Caco-2 (cell line): ENCODE measurements at regions of chr17 and their contacts with region 1.

Region 1: GRCh38 chr17:16438557-16439302 is 23.4 kb downstream of the TRPV2 start:
- DNase-seq: peak; percentile 99
- H3K4me3 ChIP-seq: peak overlapping the region; percentile 91
- H3K4me3 Mint-ChIP-seq: peak overlapping the region; percentile 86
- H3K27ac Mint-ChIP-seq: peak overlapping the region; percentile 93
- H3K4me1 ChIP-seq: peaks cover 38% of the 10 kb centered on the region
- H3K4me1 Mint-ChIP-seq: peaks cover 34% of the 10 kb centered on the region
- H3K27me3 ChIP-seq: no peaks in the 10 kb centered on the region
- H3K27me3 Mint-ChIP-seq: no peaks in the 10 kb centered on the region
- CTCF ChIP-seq: no peak

Region 2: DNA sequence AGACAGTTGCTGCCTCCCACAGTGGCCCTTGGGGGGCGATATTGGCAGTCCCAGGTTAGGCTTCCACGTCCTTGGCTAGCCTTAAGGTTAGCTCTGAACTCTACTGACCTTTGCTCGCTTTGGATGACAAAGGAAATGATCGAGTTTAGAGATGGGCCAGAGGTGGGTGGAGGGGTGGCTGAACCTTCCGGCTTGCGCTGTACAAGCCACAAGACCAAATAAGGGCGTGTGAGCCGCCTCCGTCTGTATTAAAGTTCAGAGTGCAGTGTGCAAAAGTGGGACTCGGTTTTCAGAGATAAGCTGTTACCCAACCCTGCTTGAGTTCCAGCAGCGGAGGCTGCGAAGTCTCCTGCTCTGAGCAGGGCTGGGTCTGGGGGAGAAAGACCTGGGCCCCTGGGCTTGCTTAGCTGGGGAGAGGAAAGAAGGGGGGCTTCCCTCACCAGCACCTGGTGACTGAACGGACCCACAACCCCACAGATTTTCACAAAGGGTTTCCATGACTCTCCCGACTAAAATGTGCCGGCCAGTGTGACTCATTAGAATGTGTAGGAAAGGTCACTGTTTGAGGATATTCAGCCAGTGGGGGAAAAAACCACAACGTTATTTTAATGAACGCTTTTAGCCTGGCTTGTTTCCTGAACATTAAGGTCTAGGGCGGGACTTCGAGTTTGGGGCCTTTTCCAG is 152.6 kb before region 1 on chr17:
- CTCF ChIA-PET with region 1: interaction called, 7 read pairs
- POLR2A ChIA-PET with region 1: interaction called, 8 read pairs
- intact Hi-C with region 1: loop called (anchors 5 kb)
- DNase-seq: peak; percentile 88 to 93
- H3K4me3 ChIP-seq: no peak overlapping the region
- H3K4me3 Mint-ChIP-seq: peak overlapping the region; percentile 8
- H3K27ac Mint-ChIP-seq: peak overlapping the region; percentile 71
- H3K4me1 ChIP-seq: peaks cover 47% of the 10 kb centered on the region
- H3K4me1 Mint-ChIP-seq: peaks cover 28% of the 10 kb centered on the region
- H3K27me3 ChIP-seq: no peaks in the 10 kb centered on the region
- H3K27me3 Mint-ChIP-seq: no peaks in the 10 kb centered on the region
- CTCF ChIP-seq: peak; percentile 47 to 76

Region 3: DNA sequence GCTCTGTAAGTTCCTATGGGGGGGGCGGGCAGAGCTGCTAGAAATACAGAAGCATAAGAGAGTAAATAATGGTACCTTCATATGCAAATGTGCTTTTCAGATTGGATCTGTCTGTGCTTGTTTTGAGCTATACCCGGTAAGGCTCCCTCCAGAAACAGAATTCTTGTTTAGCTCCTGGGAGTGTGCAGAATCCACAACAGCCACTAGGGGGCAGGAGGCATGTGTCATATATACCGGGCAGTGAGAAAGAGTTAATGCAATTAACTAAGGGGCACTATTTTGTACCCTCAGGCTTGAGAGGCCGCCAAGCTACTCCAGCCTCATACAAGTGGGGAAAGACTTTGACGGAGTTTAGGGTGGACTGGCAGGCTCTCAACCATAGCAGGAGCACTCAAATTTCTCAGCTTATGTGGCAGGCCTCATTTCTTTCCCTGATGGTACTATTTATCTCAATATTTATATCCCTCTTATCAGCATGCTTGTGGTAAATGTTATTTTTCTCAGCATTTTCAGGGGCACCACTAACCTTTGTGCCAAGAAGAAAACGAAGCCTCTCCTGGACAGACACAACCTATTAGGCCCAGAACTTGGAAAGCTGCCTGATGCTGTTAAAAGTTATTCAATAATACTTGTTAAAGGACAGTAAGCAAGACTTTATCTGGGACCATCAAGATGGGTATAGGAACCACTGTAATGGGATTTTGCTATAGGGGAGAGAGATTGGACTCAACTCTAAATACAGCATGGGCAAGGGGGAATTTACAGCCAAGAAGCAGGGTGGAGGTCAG is 74.8 kb before region 1 on chr17:
- CTCF ChIA-PET with region 1: interaction called, 3 read pairs
- POLR2A ChIA-PET with region 1: interaction called, 10 read pairs
- intact Hi-C with region 1: no loop called
- DNase-seq: peak; percentile 75 to 76
- H3K4me3 ChIP-seq: no peak overlapping the region
- H3K4me3 Mint-ChIP-seq: no peak overlapping the region
- H3K27ac Mint-ChIP-seq: no peak overlapping the region
- H3K4me1 ChIP-seq: 0 out of 2 replicates have a peak, but pooled peaks cover 4% of the 10 kb centered on the region
- H3K4me1 Mint-ChIP-seq: no peaks in the 10 kb centered on the region
- H3K27me3 ChIP-seq: no peaks in the 10 kb centered on the region
- H3K27me3 Mint-ChIP-seq: no peaks in the 10 kb centered on the region
- CTCF ChIP-seq: peak; percentile 93 to 95

Region 4: DNA sequence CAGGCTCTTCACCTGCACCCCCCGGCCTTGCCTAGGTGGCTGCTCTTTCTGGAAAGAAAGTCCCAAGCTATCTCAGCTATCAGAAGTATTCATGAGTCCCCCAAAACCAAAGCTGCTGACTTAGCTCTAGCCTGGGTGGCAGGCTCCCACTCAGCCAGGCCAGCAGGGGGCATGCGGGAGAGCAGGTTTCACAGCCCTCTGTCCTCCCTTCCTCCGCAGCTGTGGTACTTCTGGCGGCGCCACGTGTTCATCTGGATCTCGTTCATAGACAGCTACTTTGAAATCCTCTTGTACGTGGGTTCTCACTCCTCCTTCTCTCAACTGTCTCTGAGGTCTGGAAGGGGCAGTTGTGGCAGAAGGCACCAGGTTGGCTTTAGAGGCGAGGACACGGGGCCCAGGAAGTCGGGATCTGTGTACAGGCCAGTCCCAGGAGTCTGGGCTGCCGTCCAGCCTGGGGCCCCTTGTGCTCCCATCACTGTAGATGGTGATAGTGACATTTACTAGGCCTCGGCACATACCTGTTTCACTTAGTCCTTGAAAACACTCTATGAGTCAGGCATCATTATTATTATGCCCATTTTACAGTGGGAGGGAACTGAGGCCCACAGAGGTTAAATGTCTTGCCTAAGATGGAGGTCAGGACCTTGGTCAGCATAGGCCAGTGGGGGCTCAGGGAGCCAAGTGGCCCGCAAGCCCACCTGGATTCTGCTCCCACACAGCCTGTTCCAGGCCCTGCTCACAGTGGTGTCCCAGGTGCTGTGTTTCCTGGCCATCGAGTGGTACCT is 10.4 kb before region 1 on chr17:
- CTCF ChIA-PET with region 1: interaction called, 25 read pairs
- POLR2A ChIA-PET with region 1: interaction called, 13 read pairs
- intact Hi-C with region 1: no loop called
- DNase-seq: peak in 1 of 2 experiments; percentile 73
- H3K4me3 ChIP-seq: no peak overlapping the region
- H3K4me3 Mint-ChIP-seq: no peak overlapping the region
- H3K27ac Mint-ChIP-seq: no peak overlapping the region
- H3K4me1 ChIP-seq: no peaks in the 10 kb centered on the region
- H3K4me1 Mint-ChIP-seq: no peaks in the 10 kb centered on the region
- H3K27me3 ChIP-seq: no peaks in the 10 kb centered on the region
- H3K27me3 Mint-ChIP-seq: no peaks in the 10 kb centered on the region
- CTCF ChIP-seq: peak; percentile 74 to 84

Region 5: GRCh38 chr17:16521070-16521727 is 82.5 kb after region 1 on chr17:
- CTCF ChIA-PET with region 1: interaction called, 15 read pairs
- POLR2A ChIA-PET with region 1: interaction called, 7 read pairs
- intact Hi-C with region 1: no loop called
- DNase-seq: peak; percentile 86 to 89
- H3K4me3 ChIP-seq: no peak overlapping the region
- H3K4me3 Mint-ChIP-seq: no peak overlapping the region
- H3K27ac Mint-ChIP-seq: no peak overlapping the region
- H3K4me1 ChIP-seq: peaks cover 16% of the 10 kb centered on the region
- H3K4me1 Mint-ChIP-seq: peaks cover 14% of the 10 kb centered on the region
- H3K27me3 ChIP-seq: no peaks in the 10 kb centered on the region
- H3K27me3 Mint-ChIP-seq: no peaks in the 10 kb centered on the region
- CTCF ChIP-seq: peak; percentile 86

Region 6: GRCh38 chr17:17462048-17462824 is 1023.5 kb after region 1 on chr17:
- CTCF ChIA-PET with region 1: no interaction called
- POLR2A ChIA-PET with region 1: no interaction called
- intact Hi-C with region 1: no loop called
- DNase-seq: no peak
- H3K4me3 ChIP-seq: no peak overlapping the region
- H3K4me3 Mint-ChIP-seq: no peak overlapping the region
- H3K27ac Mint-ChIP-seq: no peak overlapping the region
- H3K4me1 ChIP-seq: no peaks in the 10 kb centered on the region
- H3K4me1 Mint-ChIP-seq: no peaks in the 10 kb centered on the region
- H3K27me3 ChIP-seq: no peaks in the 10 kb centered on the region
- H3K27me3 Mint-ChIP-seq: peaks cover 6% of the 10 kb centered on the region
- CTCF ChIP-seq: no peak